ENCODE measurements at regions of chr4 and their contacts with region 1.

Region 1: GRCh38 chr4:56261027-56261426 is 126.3 kb downstream of the AASDH start:
- DNase-seq: peak; percentile 34
- H3K4me3 Mint-ChIP-seq: peak overlapping the region; percentile 39
- H3K27ac Mint-ChIP-seq: peak overlapping the region; percentile 22
- H3K4me1 Mint-ChIP-seq: peaks cover 32% of the 10 kb centered on the region
- H3K27me3 Mint-ChIP-seq: peaks cover 19% of the 10 kb centered on the region

Region 2: GRCh38 chr4:55993994-55994663 is 266.9 kb before region 1 on chr4:
- intact Hi-C with region 1: no loop called
- DNase-seq: no peak
- H3K4me3 Mint-ChIP-seq: peak overlapping the region; percentile 25
- H3K27ac Mint-ChIP-seq: peak overlapping the region; percentile 45
- H3K4me1 Mint-ChIP-seq: peaks cover 32% of the 10 kb centered on the region
- H3K27me3 Mint-ChIP-seq: no peaks in the 10 kb centered on the region

Region 3: GRCh38 chr4:56183344-56183959 is 77.6 kb before region 1 on chr4:
- intact Hi-C with region 1: loop called (anchors 1 kb)
- DNase-seq: no peak
- H3K4me3 Mint-ChIP-seq: no peak overlapping the region
- H3K27ac Mint-ChIP-seq: no peak overlapping the region
- H3K4me1 Mint-ChIP-seq: peaks cover 35% of the 10 kb centered on the region
- H3K27me3 Mint-ChIP-seq: no peaks in the 10 kb centered on the region

Region 4: GRCh38 chr4:56821381-56822243 is 560.6 kb after region 1 on chr4 and contains the start of gene SPINK2:
- intact Hi-C with region 1: loop called (anchors 5 kb)
- DNase-seq: peak; percentile 44
- H3K4me3 Mint-ChIP-seq: peak within 1 kb of the TSS; percentile 45
- H3K27ac Mint-ChIP-seq: no peak within 1 kb of the TSS
- H3K4me1 Mint-ChIP-seq: peaks cover 29% of the 10 kb centered on the region
- H3K27me3 Mint-ChIP-seq: peaks cover 50% of the 10 kb centered on the region
- total RNA-seq, gene SPINK2: not detected in 2 replicates

Measured in activated T-helper 1 cell treated with anti-CD3 and anti-CD28 coated beads, Interleukin-12 subunit alpha, Interleukin-12 subunit beta, Interleukin-2, Interleukin-4 antibody, amounts not matched to agents 30 ng/mL and 10 ng/mL and 1 ng/mL, durations not matched to agents 14 hours and 24 hours and 36 hours (primary cell).